Endothelial cell of umbilical vein (primary cell): ENCODE measurements at regions of chr1 and their contacts with region 1.

Region 1: DNA sequence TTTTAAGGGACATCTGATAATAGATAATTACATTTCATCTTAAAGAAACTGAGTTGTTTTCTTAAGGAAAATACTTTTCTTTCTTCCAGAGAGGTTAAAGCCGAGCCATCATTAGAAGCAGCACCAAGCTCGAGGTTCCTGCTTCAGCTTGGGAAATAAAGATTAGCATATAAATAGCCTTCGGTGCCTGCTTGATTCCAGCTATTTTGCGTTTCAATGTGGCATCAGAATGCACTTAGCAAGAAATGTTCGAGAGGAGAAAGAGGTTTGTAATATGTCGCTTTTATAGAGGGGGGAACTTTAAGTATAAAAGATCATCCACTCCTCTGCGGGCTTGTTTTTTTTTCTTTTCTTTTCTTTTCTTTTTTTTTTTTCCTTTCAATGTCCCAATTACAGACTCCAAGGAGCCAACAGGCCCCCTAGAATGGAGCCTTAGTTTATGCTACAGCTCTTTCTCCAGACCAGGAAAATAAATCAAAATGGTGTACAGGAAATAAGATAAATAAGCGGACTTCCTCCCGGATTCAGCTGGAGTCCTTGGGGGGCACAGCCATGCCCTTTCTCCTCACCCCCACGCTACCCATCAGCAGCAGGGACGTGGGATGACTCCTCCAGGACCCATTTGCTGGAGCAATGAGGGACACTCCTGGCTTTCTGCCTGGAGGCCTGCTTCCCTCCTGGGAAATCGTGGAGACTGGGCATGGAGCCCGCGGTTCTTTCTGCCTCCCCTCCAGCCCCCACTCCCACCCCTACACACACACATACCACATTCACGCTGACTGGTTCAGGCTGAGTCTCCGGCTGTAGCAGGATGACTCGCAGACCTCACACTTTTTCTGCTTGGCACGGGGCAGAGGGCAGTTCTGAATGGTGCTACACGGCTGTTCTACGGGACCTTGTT is 131.6 kb downstream of the RRAGC start:
- DNase-seq: peak; percentile 99
- H3K4me3 ChIP-seq: no peak overlapping the region
- H3K27ac ChIP-seq: peak overlapping the region; percentile 53
- H3K4me1 ChIP-seq: peaks cover 18% of the 10 kb centered on the region
- H3K27me3 ChIP-seq: peaks cover 15 to 29% of the 10 kb centered on the region in 2 experiments
- CTCF ChIP-seq: no peak
- POLR2A ChIP-seq: peak; percentile 47

Region 2: GRCh38 chr1:38789498-38790169 is 61.7 kb after region 1 on chr1:
- CTCF ChIA-PET with region 1: no interaction called
- POLR2A ChIA-PET with region 1: no interaction called
- dilution Hi-C with region 1: no loop called
- intact Hi-C with region 1: loop called (anchors 5 kb)
- DNase-seq: no peak
- H3K4me3 ChIP-seq: no peak overlapping the region
- H3K27ac ChIP-seq: no peak overlapping the region
- H3K4me1 ChIP-seq: no peaks in the 10 kb centered on the region
- H3K27me3 ChIP-seq: peaks cover 9 to 11% of the 10 kb centered on the region in 2 experiments
- CTCF ChIP-seq: no peak
- POLR2A ChIP-seq: no peak

Region 3: GRCh38 chr1:38818175-38818976 is 90.4 kb after region 1 on chr1:
- CTCF ChIA-PET with region 1: no interaction called
- POLR2A ChIA-PET with region 1: no interaction called
- dilution Hi-C with region 1: no loop called
- intact Hi-C with region 1: loop called (anchors 5 kb)
- DNase-seq: no peak
- H3K4me3 ChIP-seq: no peak overlapping the region
- H3K27ac ChIP-seq: no peak overlapping the region
- H3K4me1 ChIP-seq: peaks cover 4% of the 10 kb centered on the region
- H3K27me3 ChIP-seq: peaks cover 43 to 67% of the 10 kb centered on the region in 2 experiments
- CTCF ChIP-seq: peak; percentile 62 to 85
- POLR2A ChIP-seq: no peak